ENCODE measurements at regions of chr1 and their contacts with region 1.

Region 1: DNA sequence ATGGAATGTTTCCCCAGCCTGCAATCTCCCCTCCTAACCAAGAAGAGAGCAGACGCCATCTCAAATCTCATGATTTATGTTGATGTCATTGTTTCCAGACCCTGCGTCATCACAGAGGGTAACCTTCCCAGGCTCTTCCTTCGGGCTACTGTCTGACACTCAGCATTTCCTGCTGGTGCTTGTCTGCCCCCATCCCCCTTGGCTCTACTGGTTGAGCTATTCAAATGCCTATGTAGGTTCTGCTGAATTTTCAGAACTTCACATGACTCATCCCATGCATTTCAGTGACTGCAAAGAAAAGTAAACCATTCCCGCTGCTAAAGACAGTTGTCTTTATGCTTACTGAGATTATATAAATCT is 24.8 kb upstream of the ITPKB start:
- DNase-seq: peak; percentile 97
- H3K4me3 Mint-ChIP-seq: no peak overlapping the region
- H3K27ac Mint-ChIP-seq: peak overlapping the region; percentile 4
- H3K4me1 Mint-ChIP-seq: peaks cover 37% of the 10 kb centered on the region
- H3K27me3 Mint-ChIP-seq: no peaks in the 10 kb centered on the region
- CTCF ChIP-seq: no peak

Region 2: DNA sequence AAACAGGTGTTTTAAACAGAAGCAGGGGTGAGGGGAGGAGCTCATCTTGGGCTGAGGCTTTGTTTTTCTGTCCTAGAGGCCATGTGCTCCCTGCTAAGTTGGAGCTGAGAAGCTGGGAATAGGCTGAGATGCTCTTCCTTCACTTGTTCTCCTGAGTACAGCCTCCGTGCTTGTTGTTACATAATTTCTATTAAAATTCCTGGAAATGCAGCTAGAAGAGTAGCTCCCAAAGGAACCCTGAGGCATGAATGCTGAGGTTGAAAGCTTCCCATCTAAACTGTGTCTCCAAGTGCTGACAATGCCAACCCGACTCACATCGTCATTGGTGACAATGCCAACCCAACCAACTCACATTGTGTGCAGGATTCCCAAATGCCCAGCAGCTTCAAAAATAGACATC is 12.2 kb before region 1 on chr1:
- CTCF ChIA-PET with region 1: interaction called, 3 read pairs
- POLR2A ChIA-PET with region 1: interaction called, 16 read pairs
- intact Hi-C with region 1: no loop called
- DNase-seq: no peak
- H3K4me3 Mint-ChIP-seq: no peak overlapping the region
- H3K27ac Mint-ChIP-seq: no peak overlapping the region
- H3K4me1 Mint-ChIP-seq: no peaks in the 10 kb centered on the region
- H3K27me3 Mint-ChIP-seq: no peaks in the 10 kb centered on the region
- CTCF ChIP-seq: no peak